Panc1 (cell line): ENCODE measurements at regions of chr5 and their contacts with region 1.

Region 1: DNA sequence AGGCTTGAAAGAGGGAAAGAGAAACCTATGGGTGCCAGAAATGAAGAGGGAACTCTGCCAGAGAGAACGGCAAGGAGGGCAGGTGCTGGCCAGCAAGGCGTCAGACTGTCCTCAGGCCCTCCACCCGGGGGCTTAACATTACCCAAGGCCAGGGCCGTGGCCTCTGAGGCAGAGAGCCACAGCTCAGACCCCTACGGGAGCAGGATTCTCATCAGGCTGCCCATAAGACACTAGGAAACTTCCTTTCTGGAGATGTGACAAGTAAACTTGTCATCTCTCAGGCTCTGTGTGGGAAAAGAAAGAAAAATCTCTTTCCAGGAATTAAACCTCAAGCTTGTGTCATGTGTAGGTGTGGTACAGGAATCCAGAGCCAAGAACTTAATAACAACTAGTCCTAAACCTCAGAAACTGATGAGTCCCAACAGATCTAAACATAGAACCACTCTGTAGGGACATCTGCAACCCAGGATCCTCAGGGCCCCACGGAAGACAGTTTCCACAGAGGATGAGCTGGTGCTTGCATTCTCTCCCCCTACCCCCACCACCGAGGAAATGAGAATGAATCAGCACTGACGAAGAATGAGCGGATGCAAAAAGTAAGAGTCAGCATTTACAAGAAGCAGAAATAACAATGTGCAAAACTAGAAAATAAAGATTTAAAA is 74.3 kb downstream of the DCP2 start:
- DNase-seq: no peak
- ATAC-seq: no peak
- H3K4me3 ChIP-seq: no peak overlapping the region
- H3K27ac ChIP-seq: no peak overlapping the region
- H3K4me1 ChIP-seq: no peaks in the 10 kb centered on the region
- H3K27me3 ChIP-seq: no peaks in the 10 kb centered on the region
- CTCF ChIP-seq: no peak

Region 2: GRCh38 chr5:113204525-113205161 is 153.8 kb after region 1 on chr5:
- CTCF ChIA-PET with region 1: no interaction called
- POLR2A ChIA-PET with region 1: no interaction called
- in situ Hi-C with region 1: no loop called
- intact Hi-C with region 1: loop called (anchors 10 kb)
- DNase-seq: no peak
- ATAC-seq: no peak
- H3K4me3 ChIP-seq: no peak overlapping the region
- H3K27ac ChIP-seq: no peak overlapping the region
- H3K4me1 ChIP-seq: no peaks in the 10 kb centered on the region
- H3K27me3 ChIP-seq: no peaks in the 10 kb centered on the region
- CTCF ChIP-seq: no peak